AG04449 (cell line): ENCODE measurements at regions of chr20 and their contacts with region 1.

Region 1: DNA sequence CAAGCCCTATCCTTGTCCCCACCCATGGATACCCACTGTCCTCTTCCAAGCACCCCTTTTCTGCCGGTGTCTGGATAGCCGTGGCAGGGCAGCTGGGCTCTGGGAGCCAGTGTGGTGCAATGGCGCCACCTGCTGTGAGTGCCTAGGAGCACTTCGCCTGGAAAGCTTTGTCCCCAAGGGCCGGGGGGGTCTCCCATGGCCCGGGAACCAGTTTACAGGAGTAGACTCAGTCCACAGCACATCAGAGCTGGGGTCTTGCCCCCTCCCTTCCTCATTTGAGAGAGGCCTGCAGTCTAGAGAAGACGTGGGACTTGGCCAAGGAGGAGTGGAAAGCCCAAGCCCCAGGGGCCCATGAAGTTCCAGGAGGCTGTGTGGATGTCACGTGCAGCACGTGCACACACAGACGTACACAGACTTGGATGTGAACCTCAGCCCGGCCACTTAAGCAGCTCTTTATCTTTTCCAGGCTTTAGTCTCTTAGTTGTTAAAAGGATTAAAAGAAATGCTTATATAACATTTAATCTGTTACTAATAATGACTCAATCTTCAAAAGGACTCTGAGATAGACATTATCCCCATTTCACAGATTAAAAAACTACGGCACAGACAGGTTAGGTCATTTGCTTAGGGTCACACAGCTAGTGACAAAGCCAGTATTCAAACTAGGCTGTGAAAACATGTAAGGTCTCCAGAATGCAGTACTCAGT is 40.9 kb upstream of the CDH22 start:
- DNase-seq: no peak
- H3K4me3 ChIP-seq: no peak overlapping the region
- CTCF ChIP-seq: peak; percentile 73

Region 2: GRCh38 chr20:45987108-45987780 is 361.9 kb before region 1 on chr20:
- CTCF ChIA-PET with region 1: interaction called, 14 read pairs
- POLR2A ChIA-PET with region 1: no interaction called
- DNase-seq: no peak
- H3K4me3 ChIP-seq: no peak overlapping the region
- CTCF ChIP-seq: peak; percentile 93

Region 3: GRCh38 chr20:46132705-46133120 is 216.5 kb before region 1 on chr20:
- CTCF ChIA-PET with region 1: interaction called, 67 read pairs
- POLR2A ChIA-PET with region 1: no interaction called
- DNase-seq: no peak
- H3K4me3 ChIP-seq: no peak overlapping the region
- CTCF ChIP-seq: peak; percentile 95

Region 4: GRCh38 chr20:46307139-46307998 is 41.8 kb before region 1 on chr20:
- CTCF ChIA-PET with region 1: interaction called, 11 read pairs
- POLR2A ChIA-PET with region 1: interaction called, 3 read pairs
- DNase-seq: no peak
- H3K4me3 ChIP-seq: no peak overlapping the region
- CTCF ChIP-seq: peak; percentile 89

Region 5: DNA sequence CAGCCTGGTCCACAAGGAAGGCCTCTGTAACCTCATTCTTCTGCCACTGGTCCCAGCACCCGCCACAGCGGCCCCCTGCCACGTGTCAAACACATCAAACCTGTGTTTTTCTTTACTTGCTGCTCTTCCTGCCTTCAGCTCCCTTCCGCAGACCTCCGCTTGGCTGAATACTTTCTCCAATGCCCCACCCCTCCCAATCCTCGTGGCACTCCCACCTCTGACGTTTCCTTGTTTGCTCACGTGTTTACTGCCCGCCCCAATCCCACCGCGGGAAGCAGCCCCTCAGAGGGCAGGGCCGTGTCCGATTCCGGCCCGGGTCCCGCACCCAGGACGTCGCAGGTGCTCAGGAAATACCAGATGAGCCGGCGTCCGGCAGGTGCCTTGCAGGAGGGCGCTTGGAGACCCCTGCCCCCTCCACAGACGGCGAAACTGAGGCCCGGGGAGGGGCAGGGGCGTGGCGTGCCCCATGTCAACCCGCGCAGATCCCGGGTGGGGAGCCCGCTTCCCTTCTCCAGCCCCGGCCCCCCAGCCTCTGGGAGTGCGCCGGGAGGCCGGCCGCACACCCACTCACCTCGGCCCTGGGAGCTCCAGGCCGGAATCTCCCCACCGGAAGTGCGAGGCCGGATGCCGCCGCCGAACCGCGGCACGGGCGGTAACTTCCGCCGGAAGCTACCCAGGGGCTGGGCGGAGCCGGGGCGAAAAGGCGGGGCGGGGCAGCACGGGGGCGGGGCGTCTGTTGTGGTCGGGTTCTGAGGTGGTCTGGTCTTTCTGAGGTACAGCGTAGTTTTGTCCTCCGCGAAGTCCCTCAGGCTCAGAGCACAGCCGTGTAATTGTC is 14.8 kb after region 1 on chr20:
- CTCF ChIA-PET with region 1: interaction called, 57 read pairs
- POLR2A ChIA-PET with region 1: interaction called, 7 read pairs
- DNase-seq: peak; percentile 61
- H3K4me3 ChIP-seq: peak overlapping the region; percentile 99
- CTCF ChIP-seq: no peak

Region 6: GRCh38 chr20:46378412-46379009 is 29.3 kb after region 1 on chr20:
- CTCF ChIA-PET with region 1: interaction called, 10 read pairs
- POLR2A ChIA-PET with region 1: no interaction called
- DNase-seq: no peak
- H3K4me3 ChIP-seq: no peak overlapping the region
- CTCF ChIP-seq: no peak

Region 7: GRCh38 chr20:46406199-46406985 is 57.2 kb after region 1 on chr20 and contains the start of gene ELMO2:
- CTCF ChIA-PET with region 1: interaction called, 10 read pairs
- POLR2A ChIA-PET with region 1: no interaction called
- DNase-seq: peak; percentile 75
- H3K4me3 ChIP-seq: peak within 1 kb of the TSS; percentile 90
- CTCF ChIP-seq: no peak

Region 8: DNA sequence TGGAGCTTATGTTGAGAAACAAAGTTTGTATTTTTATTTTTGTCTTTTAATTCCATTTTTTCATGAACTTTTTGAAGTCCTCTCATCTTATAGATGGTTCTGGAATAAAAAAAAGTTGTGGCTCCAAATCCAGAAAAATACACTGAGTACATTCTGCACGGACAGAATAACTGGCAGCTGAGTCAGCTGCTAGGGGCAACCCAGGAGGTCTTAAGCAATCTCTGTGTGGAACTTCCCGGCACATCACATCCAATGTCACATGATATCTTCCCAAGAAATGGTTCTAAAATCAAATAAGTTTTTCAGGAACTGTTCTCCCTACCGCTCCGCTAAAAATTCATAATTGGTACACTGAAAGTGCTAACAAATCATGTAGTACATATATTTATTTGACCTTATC is 272.3 kb after region 1 on chr20:
- CTCF ChIA-PET with region 1: no interaction called
- POLR2A ChIA-PET with region 1: no interaction called
- DNase-seq: peak; percentile 7
- H3K4me3 ChIP-seq: no peak overlapping the region
- CTCF ChIP-seq: no peak